ENCODE measurements at regions of chr9 and their contacts with region 1.

Region 1: GRCh38 chr9:121686930-121687541 is 35.6 kb downstream of the DAB2IP start:
- DNase-seq: peak; percentile 88
- ATAC-seq: peak; percentile 93
- H3K4me3 Mint-ChIP-seq: no peak overlapping the region
- H3K27ac Mint-ChIP-seq: no peak overlapping the region
- H3K4me1 Mint-ChIP-seq: no peaks in the 10 kb centered on the region
- H3K27me3 Mint-ChIP-seq: peaks cover 4% of the 10 kb centered on the region
- CTCF ChIP-seq: peak; percentile 82

Region 2: GRCh38 chr9:121545875-121546423 is 141.1 kb before region 1 on chr9:
- CTCF ChIA-PET with region 1: interaction called, 19 read pairs
- POLR2A ChIA-PET with region 1: no interaction called
- intact Hi-C with region 1: loop called (anchors 10 kb)
- DNase-seq: peak; percentile 85
- ATAC-seq: peak; percentile 84
- H3K4me3 Mint-ChIP-seq: no peak overlapping the region
- H3K27ac Mint-ChIP-seq: no peak overlapping the region
- H3K4me1 Mint-ChIP-seq: no peaks in the 10 kb centered on the region
- H3K27me3 Mint-ChIP-seq: peaks cover 25% of the 10 kb centered on the region
- CTCF ChIP-seq: peak; percentile 83

Region 3: GRCh38 chr9:121698627-121699570 is 11.9 kb after region 1 on chr9:
- CTCF ChIA-PET with region 1: interaction called, 13 read pairs
- POLR2A ChIA-PET with region 1: interaction called, 3 read pairs
- intact Hi-C with region 1: loop called (anchors 1 kb)
- DNase-seq: peak; percentile 74
- ATAC-seq: peak; percentile 70
- H3K4me3 Mint-ChIP-seq: peak overlapping the region; percentile 26
- H3K27ac Mint-ChIP-seq: no peak overlapping the region
- H3K4me1 Mint-ChIP-seq: peaks cover 5% of the 10 kb centered on the region
- H3K27me3 Mint-ChIP-seq: peaks cover 28% of the 10 kb centered on the region
- CTCF ChIP-seq: no peak

Region 4: DNA sequence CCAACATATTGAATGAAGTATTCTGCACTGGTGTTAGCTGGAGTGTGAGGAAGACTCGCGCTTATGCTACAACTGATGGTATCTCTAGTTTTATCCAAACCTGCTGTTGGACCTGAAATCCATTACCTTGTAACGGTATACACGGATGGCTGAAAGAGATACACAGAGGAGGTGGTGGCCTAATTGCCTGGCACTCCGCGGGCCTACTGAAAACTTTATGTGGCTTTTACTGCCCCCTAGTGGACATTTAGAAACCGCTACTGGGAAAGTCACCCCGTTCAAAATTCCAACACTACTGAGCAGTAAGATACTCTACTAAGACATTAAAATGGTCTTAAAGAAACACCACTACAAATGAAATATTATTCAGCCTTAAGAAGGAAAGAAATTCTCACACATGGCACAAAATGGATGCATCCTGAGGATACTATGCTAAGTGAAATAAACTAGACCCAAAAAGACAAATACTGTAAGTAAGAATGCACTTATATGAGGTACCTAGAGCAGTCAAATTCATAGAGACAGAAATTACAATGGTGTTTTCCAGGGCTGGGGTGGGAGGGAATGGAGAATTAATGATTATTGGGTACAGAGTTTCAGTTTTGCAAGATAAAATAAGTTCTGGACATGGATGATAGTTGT is 305.7 kb after region 1 on chr9:
- CTCF ChIA-PET with region 1: interaction called, 17 read pairs
- POLR2A ChIA-PET with region 1: no interaction called
- intact Hi-C with region 1: loop called (anchors 1 kb)
- DNase-seq: peak; percentile 67
- ATAC-seq: peak; percentile 80
- H3K4me3 Mint-ChIP-seq: no peak overlapping the region
- H3K27ac Mint-ChIP-seq: no peak overlapping the region
- H3K4me1 Mint-ChIP-seq: no peaks in the 10 kb centered on the region
- H3K27me3 Mint-ChIP-seq: no peaks in the 10 kb centered on the region
- CTCF ChIP-seq: peak; percentile 88